Adrenal gland (tissue), 19 donors: ENCODE measurements at regions of chr2 and their contacts with region 1.

Region 1: GRCh38 chr2:226799181-226799975 is at the start of gene IRS1:
- DNase-seq: peak; percentile 72 to 85 (median 82)
- H3K4me3 ChIP-seq: peak within 1 kb of the TSS; percentile 63 to 86 (median 80)
- H3K27ac ChIP-seq: peak within 1 kb of the TSS; percentile 3 to 94 (median 89)
- H3K4me1 ChIP-seq: peaks cover 32 to 43% of the 10 kb centered on the region in 2 donors
- H3K27me3 ChIP-seq: no peaks in the 10 kb centered on the region
- CTCF ChIP-seq: peak in 3 of 6 experiments; percentile 45 to 66 (median 61)
- POLR2A ChIP-seq: peak in 1 of 2 donors; percentile 77
- total RNA-seq, gene IRS1: 13.5 to 55.7 (median 38.2) TPM

Region 2: DNA sequence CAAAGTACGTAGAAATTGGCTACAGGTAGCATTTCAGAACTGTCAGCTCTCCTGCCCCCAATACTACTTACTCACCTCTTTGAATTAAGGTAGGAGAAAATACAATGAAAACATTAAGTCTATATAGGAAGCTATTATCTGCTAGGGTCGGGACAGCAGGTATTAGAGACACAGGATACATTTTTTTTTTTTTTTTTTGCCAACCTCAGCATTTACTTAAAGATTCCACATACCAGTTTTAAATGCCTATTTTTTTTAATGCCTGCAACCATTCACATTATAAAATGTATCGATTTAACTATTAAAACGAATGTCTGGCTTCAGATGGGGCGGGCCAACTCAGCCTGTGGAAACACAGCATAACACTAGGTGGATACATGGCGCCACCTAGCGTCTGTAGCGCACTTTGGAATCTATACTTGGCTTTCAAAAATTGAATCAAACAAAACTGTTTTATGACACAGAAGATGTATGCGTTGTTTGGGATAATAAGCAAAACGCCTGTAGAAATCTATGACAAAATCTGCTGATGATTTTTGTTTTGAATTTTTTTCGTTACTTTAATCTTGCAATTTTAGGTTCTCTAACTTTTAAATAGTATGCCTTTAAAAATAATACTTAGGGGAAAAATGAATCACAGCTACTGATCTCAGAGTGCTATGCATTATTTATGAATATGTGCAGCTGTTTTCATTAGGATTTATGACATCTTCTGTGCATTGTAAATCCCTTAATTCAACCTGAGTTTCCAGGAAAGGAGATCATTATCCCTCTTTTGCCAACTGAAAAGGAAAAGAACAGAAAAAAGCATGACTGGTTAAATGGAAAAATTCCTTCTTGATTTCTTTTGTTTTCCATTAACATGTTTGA is 1138.9 kb before region 1 on chr2:
- intact Hi-C with region 1: loop called in 1 of 2 experiments (anchors 10 kb)
- DNase-seq: peak; percentile 53 to 92 (median 80)
- H3K4me3 ChIP-seq: no peak overlapping the region
- H3K27ac ChIP-seq: no peak overlapping the region
- H3K4me1 ChIP-seq: no peaks in the 10 kb centered on the region
- H3K27me3 ChIP-seq: no peaks in the 10 kb centered on the region
- CTCF ChIP-seq: peak; percentile 67 to 91 (median 80)
- POLR2A ChIP-seq: no peak

Region 3: DNA sequence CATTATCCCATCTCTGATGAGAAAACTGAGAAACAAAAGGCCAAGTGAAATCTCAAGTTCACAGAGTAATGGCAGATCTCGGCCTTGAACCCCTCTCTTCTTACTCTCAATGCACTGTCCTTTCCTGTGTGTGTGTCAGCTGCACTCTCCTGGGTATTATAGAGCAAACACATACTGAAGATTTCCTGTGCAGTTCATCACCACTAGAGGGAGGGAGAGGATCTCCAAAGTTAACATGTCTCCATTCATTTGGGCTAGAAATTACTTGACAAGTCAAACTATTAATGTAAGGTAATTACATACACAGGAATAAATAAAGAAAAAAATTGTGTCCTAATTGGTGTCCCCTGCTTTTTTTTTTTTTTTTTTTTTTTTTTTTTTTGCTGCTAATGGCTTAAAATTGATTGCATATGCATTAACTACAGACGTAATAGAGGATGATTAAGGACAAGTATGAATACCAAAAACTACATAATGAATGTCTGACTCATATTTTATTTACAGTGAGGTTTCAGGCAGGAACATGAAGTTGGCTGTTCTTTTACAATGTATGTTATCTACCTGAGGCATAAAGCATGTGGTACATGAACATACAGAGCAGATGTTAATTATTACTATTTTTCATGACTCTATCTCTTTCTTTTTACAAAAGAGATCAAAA is 1130.6 kb before region 1 on chr2:
- intact Hi-C with region 1: loop called (anchors 5 to 10 kb)
- DNase-seq: peak in 5 of 7 donors; percentile 10 to 32 (median 23)
- H3K4me3 ChIP-seq: no peak overlapping the region
- H3K27ac ChIP-seq: no peak overlapping the region
- H3K4me1 ChIP-seq: no peaks in the 10 kb centered on the region
- H3K27me3 ChIP-seq: no peaks in the 10 kb centered on the region
- CTCF ChIP-seq: peak; percentile 59 to 75 (median 66)
- POLR2A ChIP-seq: no peak

Region 4: GRCh38 chr2:225889446-225889850 is 909.9 kb before region 1 on chr2:
- intact Hi-C with region 1: loop called (anchors 5 kb)
- DNase-seq: peak in 3 of 7 donors; percentile 22 to 49 (median 27)
- H3K4me3 ChIP-seq: no peak overlapping the region
- H3K27ac ChIP-seq: no peak overlapping the region
- H3K4me1 ChIP-seq: peaks cover 0 to 7% of the 10 kb centered on the region in 2 donors
- H3K27me3 ChIP-seq: no peaks in the 10 kb centered on the region
- CTCF ChIP-seq: peak; percentile 73 to 88 (median 84)
- POLR2A ChIP-seq: no peak

Region 5: DNA sequence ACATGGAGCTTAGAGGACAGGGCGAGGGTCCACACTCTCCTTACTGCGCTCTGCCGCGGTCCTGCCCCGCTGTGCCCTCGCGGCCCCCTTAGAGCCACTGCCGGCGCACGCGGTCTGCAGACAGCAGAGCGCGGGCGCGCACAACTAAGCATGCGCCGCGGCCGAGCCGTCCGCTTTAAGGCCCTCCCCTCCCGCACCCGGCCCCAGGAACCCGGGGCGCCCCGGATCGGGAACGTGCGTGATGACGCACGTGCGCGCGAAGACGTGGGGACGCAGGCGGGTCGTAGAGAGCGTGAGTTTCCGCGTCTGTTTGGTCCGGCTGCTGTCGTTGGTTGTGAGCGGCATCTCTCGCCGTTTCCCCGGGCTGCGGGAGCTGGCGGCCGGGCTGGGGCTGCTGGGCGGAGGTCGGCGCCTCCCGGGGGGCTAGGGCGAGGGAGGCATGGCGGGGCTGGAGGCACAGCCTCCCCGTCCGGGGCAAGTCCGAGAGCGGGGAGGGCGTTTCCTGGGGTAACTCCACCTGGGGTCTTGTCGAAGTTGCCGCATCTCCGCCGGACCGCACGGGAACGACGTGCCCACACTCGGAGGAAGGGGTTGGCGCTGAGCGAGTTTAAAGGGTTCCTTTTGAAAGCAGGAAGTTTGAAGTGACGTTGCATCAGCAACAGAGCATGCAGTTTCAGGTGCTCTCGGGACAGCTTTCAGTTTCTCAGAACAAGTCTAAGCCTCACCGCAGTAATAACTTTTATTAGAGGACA is 36.6 kb after region 1 on chr2 and contains the start of gene RHBDD1:
- intact Hi-C with region 1: no loop called
- DNase-seq: peak; percentile 93 to 97 (median 95)
- H3K4me3 ChIP-seq: peak within 1 kb of the TSS; percentile 21 to 92 (median 83)
- H3K27ac ChIP-seq: peak within 1 kb of the TSS; percentile 97 to 100 (median 99)
- H3K4me1 ChIP-seq: peaks cover 7 to 29% of the 10 kb centered on the region in 2 donors
- H3K27me3 ChIP-seq: no peaks in the 10 kb centered on the region
- CTCF ChIP-seq: no peak
- POLR2A ChIP-seq: peak; percentile 93 to 97
- total RNA-seq, gene RHBDD1: 6.0 to 47.8 (median 32.1) TPM

Region 6: GRCh38 chr2:226885769-226886435 is 86.5 kb after region 1 on chr2:
- intact Hi-C with region 1: no loop called
- DNase-seq: no peak
- H3K4me3 ChIP-seq: no peak overlapping the region
- H3K27ac ChIP-seq: no peak overlapping the region
- H3K4me1 ChIP-seq: no peaks in the 10 kb centered on the region
- H3K27me3 ChIP-seq: no peaks in the 10 kb centered on the region
- CTCF ChIP-seq: no peak
- POLR2A ChIP-seq: no peak

Region 7: DNA sequence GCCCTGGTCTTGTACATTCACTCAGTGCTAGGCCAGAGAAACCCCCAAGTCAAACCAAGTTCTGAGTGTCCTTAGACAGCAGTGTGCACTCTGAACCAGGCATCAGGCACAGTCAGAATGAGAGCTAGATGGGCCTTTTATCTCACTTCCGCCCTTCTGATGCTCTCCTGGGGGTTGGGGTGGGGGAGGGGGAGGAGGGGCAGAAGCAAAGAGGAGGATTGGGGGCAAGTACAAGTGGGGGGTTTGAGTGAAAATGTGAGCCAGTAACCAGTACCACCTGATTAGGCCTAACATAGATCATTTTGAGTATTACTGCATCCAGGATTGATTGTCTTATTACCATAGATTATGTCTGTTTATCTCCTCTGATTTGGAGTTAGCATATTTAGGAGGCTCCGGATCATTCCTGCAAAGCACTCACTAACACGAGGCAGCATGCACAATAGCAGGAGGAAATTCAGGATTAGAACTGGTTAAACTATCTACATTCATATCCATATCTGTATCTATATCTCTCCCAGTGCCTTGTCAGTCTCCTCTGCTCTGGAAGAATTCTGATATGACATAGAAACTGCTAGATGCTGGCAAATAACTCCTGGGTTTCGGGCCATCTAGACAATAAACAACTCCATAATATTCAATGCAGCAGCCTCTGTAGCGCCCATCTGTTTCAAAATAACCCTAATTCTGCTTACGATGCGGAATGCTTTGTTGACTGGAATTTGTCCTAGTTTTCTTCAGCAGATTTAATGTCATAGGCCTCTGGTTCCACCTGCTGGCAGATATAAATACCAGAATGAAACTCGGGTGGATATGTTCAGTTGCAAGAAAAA is 185.6 kb after region 1 on chr2:
- intact Hi-C with region 1: loop called in 1 of 2 experiments (anchors 10 kb)
- DNase-seq: peak; percentile 42 to 80 (median 57)
- H3K4me3 ChIP-seq: no peak overlapping the region
- H3K27ac ChIP-seq: peak overlapping the region in 1 of 5 donors; percentile 19
- H3K4me1 ChIP-seq: peaks cover 0 to 17% of the 10 kb centered on the region in 2 donors
- H3K27me3 ChIP-seq: no peaks in the 10 kb centered on the region
- CTCF ChIP-seq: peak; percentile 48 to 87 (median 83)
- POLR2A ChIP-seq: no peak

Region 8: DNA sequence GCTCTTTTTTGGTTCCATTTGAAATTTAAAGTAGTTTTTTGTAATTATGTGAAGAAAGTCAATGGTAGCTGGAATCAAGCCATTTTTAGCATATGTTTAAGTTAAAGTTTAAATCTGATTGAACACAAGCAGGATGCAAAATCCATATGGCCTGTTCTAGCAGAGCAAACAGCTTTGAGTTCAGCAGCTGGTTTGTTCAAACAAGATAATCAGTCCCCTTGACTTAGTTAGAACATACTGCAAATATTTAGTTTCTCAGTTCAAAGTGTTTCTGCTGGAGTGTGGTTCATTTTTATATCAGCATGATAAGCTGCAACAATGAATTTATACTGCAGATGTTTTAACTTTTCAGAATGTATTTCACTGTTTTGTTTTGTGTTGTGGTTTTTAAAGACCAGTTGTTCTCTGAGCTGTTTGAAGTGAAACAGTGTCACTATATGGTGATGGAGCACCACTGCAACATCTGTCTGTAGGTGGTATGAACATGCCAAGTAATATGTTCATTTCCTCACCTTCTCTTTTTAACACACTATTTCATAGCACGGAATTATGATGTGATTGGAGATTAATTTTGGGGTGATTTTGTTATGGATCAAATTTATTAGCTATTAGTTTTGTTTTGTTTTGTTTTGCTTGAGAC is 239.3 kb after region 1 on chr2:
- intact Hi-C with region 1: no loop called
- DNase-seq: no peak
- H3K4me3 ChIP-seq: no peak overlapping the region
- H3K27ac ChIP-seq: no peak overlapping the region
- H3K4me1 ChIP-seq: no peaks in the 10 kb centered on the region
- H3K27me3 ChIP-seq: no peaks in the 10 kb centered on the region
- CTCF ChIP-seq: no peak
- POLR2A ChIP-seq: no peak